BJ (cell line): ENCODE measurements at regions of chr11 and their contacts with region 1.

Region 1: DNA sequence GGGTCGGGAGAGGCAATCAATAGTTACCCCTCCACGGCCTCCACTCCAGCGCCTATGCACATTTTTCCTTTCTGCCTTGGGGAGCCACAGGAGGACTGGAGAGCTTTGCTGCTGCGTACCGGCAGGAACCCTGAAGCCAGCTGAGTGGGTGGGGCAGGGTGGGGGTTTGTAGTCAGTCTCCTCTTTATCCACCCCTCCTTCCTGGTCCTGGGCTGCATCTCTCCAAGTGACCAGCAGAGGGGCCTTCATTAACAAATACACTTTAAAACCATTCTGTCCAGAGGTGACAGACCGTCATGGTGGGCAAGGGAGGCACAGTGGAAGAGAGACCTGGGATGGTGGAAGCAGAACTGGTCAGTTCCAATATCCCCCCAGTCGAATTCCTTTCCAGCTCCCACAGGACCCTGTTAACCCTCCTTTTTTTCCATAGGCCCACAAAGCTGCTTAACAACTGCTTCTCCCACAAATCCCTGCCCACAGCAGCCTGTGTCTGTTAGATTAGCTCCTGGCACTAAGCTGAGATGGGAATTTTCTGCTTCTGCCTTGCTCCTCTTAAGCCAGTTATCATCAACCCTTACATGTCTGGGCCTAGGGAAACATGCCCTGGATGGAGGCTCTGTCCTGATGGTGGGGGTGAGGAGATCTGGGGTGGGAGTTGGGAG is 3.9 kb upstream of the ABCG4 start:
- DNase-seq: peak; percentile 16
- H3K4me3 ChIP-seq: no peak overlapping the region
- H3K27me3 ChIP-seq: peaks cover 3% of the 10 kb centered on the region; the same call in 1 of the 2 replicates
- CTCF ChIP-seq: peak; percentile 83

Region 2: DNA sequence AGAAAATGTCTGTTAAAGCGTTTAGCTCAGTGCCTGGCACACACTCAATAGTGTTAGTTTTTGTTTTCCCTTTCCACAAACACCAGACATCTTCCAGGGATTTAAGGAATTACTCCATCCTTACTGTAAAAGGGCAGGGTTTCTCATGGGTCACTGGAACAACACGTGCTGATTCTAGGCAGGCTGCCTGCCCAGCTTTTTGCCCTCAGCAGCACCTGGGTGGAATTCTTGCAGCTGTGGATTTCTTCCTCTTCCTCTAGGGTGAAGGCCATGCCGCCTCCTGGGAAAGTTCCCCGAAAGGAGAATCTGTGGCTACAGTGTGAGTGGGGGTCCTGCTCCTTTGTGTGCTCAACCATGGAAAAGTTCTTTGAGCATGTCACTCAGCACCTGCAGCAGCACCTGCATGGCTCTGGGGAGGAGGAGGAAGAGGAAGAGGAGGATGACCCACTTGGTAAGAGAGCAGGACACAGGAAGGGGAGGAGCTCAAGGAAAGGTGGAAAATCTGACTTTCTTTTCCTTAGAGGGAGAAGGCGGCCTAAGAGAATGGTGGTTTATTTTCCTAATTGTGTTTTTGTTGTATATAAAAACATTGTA is 18.2 kb before region 1 on chr11:
- CTCF ChIA-PET with region 1: interaction called, 34 read pairs
- POLR2A ChIA-PET with region 1: interaction called, 3 read pairs
- DNase-seq: no peak
- H3K4me3 ChIP-seq: no peak overlapping the region
- H3K27me3 ChIP-seq: no peaks in the 10 kb centered on the region
- CTCF ChIP-seq: no peak

Region 3: GRCh38 chr11:119134389-119134978 is 10.5 kb before region 1 on chr11:
- CTCF ChIA-PET with region 1: interaction called, 34 read pairs
- POLR2A ChIA-PET with region 1: no interaction called
- DNase-seq: no peak
- H3K4me3 ChIP-seq: no peak overlapping the region
- H3K27me3 ChIP-seq: no peaks in the 10 kb centered on the region
- CTCF ChIP-seq: peak; percentile 58

Region 4: DNA sequence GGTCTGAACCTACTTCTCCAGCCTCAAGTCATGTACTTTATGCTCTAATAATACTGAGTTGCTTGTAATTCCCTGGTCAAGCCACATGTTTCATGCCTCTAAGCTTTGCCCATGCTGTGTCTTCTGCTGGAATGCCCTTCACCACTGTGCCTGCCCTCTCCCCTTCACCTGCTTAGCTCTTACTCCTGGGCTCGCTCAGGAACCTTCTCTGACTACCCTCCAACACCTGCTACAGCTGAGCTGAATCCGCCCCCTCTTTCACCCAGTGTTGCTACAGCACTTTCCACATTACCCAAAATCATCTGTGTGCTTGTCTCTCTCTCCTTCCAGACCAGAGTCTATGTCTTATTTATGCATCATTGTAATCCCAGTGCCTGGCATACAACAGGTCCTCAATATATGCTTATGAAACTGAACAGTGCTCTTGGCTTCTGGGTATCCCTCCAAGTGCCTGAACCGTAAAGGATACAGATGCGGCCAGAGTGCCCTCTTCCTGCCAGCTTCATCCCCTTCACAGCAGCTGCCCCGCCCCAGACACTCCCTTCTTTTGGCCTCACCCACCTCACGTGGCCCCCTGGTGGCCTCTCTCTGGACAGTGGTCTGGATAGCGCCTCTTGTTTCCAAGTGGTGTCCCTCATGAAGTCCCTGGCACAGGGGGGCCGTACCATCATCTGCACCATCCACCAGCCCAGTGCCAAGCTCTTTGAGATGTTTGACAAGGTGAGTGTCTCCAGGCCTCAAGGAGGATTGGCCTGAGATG is 11.0 kb after region 1 on chr11:
- CTCF ChIA-PET with region 1: interaction called, 12 read pairs
- POLR2A ChIA-PET with region 1: no interaction called
- DNase-seq: no peak
- H3K4me3 ChIP-seq: no peak overlapping the region
- H3K27me3 ChIP-seq: peaks cover 13% of the 10 kb centered on the region
- CTCF ChIP-seq: peak; percentile 32; the same call in 1 of the 2 replicates

Region 5: GRCh38 chr11:119168471-119169281 is 23.7 kb after region 1 on chr11 and contains the start of gene NLRX1:
- CTCF ChIA-PET with region 1: interaction called, 10 read pairs
- POLR2A ChIA-PET with region 1: no interaction called
- DNase-seq: peak; percentile 15
- H3K4me3 ChIP-seq: peak within 1 kb of the TSS; percentile 65
- H3K27me3 ChIP-seq: no peaks in the 10 kb centered on the region
- CTCF ChIP-seq: peak; percentile 96
- polyA plus RNA-seq, gene NLRX1: 12.0 and 19.4 TPM in 2 replicates

Region 6: GRCh38 chr11:119196833-119197483 is 52.0 kb after region 1 on chr11:
- CTCF ChIA-PET with region 1: interaction called, 21 read pairs
- POLR2A ChIA-PET with region 1: interaction called, 7 read pairs
- DNase-seq: peak; percentile 35
- H3K4me3 ChIP-seq: no peak overlapping the region
- H3K27me3 ChIP-seq: no peaks in the 10 kb centered on the region
- CTCF ChIP-seq: peak; percentile 84

Region 7: DNA sequence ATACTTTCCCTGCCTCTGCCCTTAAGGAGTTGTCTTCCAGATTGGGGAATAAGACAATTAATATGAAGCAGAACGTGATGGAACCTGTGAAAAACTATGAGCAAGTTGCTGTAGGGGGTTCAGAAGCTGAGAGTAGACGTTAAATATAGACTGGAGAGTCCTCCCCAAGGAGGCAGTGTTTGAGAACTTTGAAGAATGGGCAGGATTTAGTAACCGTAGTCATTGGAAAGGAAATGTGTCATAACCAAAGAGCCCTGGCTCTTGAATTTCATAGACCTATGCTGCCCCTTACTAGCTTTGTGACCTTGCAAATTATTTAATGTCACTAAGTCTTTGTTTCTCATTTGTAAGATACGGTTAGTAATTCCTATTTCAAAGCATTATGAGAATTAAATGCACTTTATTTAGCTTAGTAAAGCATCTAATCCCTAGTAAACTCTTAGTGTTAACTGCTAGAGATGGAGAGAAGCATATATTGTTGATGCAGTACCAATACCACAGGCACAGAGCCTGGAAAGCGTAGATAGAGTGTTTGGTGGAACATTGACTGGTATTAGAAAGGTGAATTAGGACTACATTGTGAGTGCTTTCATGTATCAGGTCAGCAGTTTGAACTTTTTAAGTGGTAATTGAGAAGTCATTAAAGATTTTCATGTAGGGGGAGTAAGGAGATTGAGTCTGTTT is 117.9 kb after region 1 on chr11:
- CTCF ChIA-PET with region 1: no interaction called
- POLR2A ChIA-PET with region 1: no interaction called
- DNase-seq: no peak
- H3K4me3 ChIP-seq: no peak overlapping the region
- H3K27me3 ChIP-seq: no peaks in the 10 kb centered on the region
- CTCF ChIP-seq: no peak